Dorsolateral prefrontal cortex (tissue), 120 donors: ENCODE measurements at regions of chr2 and their contacts with region 1.

Region 1: GRCh38 chr2:21317131-21317530 is 193.4 kb downstream of the TDRD15 start:
- DNase-seq: peak in 9 of 10 donors; percentile 34 to 78 (median 59)
- H3K4me3 ChIP-seq: no peak overlapping the region
- H3K27ac ChIP-seq: peak overlapping the region in 41 of 59 donors; percentile 3 to 80 (median 43)
- H3K27me3 ChIP-seq: no peaks in the 10 kb centered on the region
- CTCF ChIP-seq: peak; percentile 42 to 96 (median 82)

Region 2: DNA sequence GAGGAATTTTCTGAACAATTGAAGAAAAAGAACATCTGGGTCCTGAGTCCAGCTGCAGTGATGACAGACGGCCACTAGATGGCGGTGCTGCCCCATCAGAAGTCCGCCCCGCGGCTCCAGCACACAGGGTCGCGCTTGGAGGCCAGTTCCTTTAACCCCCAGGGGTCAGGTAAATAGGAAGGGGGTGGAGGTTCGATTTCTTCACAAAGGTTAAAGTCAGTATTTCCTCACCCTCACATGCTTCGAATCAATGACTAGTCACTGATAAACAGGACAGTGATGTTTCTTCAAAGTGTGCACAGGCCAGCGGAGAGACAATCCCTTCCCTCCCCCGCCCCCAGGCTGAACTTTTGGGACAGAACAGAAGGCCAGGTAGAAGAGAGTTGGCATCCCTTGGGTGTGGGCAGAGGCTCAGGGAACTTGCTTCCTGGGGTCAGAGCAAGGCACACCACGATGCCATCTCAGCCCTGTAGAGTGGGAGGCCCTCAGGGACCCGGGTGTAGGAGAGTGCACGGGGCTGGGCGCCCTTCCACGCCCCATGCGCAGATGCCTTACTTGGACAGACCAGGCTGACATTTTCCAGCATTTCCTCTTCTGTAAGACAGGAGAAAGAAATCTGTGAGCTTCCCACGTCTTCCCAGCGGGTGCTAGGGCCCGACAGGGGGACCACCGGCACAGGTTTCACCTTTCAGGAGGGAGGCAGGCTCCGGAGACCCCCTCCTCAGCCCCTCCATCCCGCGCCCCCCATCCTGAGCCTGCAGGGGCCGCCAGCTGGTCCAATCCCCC is 274.0 kb before region 1 on chr2:
- intact Hi-C with region 1: loop called in 1 of 2 experiments (anchors 5 kb)
- DNase-seq: peak; percentile 44 to 82 (median 64)
- H3K4me3 ChIP-seq: peak overlapping the region in 57 of 59 donors; percentile 10 to 65 (median 42)
- H3K27ac ChIP-seq: peak overlapping the region in 1 of 59 donors; percentile 44
- H3K27me3 ChIP-seq: peaks cover 0 to 9% (median 0%) of the 10 kb centered on the region in 45 donors
- CTCF ChIP-seq: peak; percentile 86 to 100 (median 99)

Region 3: DNA sequence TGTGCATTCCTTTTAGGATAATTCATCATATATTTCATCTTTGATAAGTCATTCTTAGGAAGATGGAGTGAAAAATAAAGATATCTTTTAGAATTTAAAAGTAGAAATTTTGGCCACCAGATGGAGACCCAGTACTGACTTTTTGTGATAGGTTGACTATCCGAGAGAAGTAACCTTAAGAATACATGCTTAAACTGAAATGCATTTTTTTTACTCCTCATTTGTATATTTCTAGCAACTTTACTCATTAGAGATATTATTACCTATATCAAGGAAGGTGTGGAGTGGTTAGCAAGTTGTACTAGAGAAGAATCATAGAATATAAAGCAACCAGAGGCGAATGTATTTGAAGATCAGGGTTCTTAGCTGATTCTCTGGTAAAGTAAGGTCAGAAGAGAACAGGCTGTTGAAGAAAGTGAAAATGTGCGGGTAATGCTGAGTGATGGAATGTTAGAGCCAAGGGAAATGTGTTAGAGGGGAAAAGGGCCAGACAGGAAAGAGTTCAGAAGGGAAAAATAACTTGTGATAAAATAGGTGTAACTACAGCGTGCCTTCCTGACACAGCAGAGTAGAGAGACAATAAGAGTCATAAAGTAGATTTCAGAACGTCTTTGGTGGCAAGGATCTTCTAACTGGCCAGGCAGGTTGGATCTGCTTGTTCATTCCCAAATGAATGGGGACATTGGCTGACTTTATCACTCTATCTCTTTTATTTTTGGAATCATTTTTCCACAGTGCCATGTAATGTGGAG is 141.1 kb before region 1 on chr2:
- intact Hi-C with region 1: loop called (anchors 1 to 2 kb)
- DNase-seq: no peak
- H3K4me3 ChIP-seq: peak overlapping the region in 1 of 59 donors; percentile 2
- H3K27ac ChIP-seq: peak overlapping the region in 53 of 59 donors; percentile 1 to 86 (median 62)
- H3K27me3 ChIP-seq: no peaks in the 10 kb centered on the region
- CTCF ChIP-seq: peak; percentile 52 to 90 (median 74)

Region 4: GRCh38 chr2:21256006-21256405 is 61.1 kb before region 1 on chr2:
- intact Hi-C with region 1: loop called in 1 of 2 experiments (anchors 2 kb)
- DNase-seq: peak; percentile 24 to 93 (median 77)
- H3K4me3 ChIP-seq: peak overlapping the region in 1 of 59 donors; percentile 10
- H3K27ac ChIP-seq: peak overlapping the region; percentile 73 to 100 (median 98)
- H3K27me3 ChIP-seq: no peaks in the 10 kb centered on the region
- CTCF ChIP-seq: peak in 4 of 56 donors; percentile 11 to 24 (median 14)

Region 5: GRCh38 chr2:21276163-21276562 is 41.0 kb before region 1 on chr2:
- intact Hi-C with region 1: loop called in 1 of 2 experiments (anchors 5 kb)
- DNase-seq: no peak
- H3K4me3 ChIP-seq: no peak overlapping the region
- H3K27ac ChIP-seq: peak overlapping the region in 2 of 59 donors; percentile 0 to 2
- H3K27me3 ChIP-seq: no peaks in the 10 kb centered on the region
- CTCF ChIP-seq: no peak

Region 6: GRCh38 chr2:21381421-21381820 is 64.3 kb after region 1 on chr2:
- intact Hi-C with region 1: loop called in 1 of 2 experiments (anchors 5 kb)
- DNase-seq: peak in 1 of 10 donors; percentile 20
- H3K4me3 ChIP-seq: peak overlapping the region in 3 of 59 donors; percentile 0 to 9 (median 4)
- H3K27ac ChIP-seq: peak overlapping the region in 40 of 59 donors; percentile 1 to 91 (median 66)
- H3K27me3 ChIP-seq: peaks cover 0 to 7% (median 0%) of the 10 kb centered on the region in 45 donors
- CTCF ChIP-seq: peak in 2 of 56 donors; percentile 3 to 12

Region 7: DNA sequence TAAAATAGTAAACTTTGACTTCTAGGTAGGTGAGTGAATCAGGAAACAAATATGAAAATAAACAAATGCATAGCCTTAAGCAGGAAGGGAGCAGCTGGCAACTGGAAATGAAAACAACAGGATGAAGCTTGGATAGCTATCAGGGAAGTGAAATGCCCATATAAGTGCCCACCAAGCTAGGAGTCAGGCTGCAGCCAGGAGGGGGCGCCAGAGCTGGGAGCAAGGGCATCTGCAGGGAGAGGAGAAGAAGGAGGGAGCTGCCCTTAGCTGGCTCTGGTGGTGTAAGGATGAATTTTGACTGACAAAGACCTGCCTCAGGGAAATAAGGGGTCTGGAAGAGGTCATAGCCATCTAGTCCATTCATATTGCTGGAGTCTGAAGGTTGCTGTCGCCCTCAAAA is 104.9 kb after region 1 on chr2:
- intact Hi-C with region 1: no loop called
- DNase-seq: no peak
- H3K4me3 ChIP-seq: no peak overlapping the region
- H3K27ac ChIP-seq: no peak overlapping the region
- H3K27me3 ChIP-seq: peaks cover 0 to 5% (median 0%) of the 10 kb centered on the region in 45 donors
- CTCF ChIP-seq: peak in 37 of 56 donors; percentile 12 to 48 (median 30)

Region 8: DNA sequence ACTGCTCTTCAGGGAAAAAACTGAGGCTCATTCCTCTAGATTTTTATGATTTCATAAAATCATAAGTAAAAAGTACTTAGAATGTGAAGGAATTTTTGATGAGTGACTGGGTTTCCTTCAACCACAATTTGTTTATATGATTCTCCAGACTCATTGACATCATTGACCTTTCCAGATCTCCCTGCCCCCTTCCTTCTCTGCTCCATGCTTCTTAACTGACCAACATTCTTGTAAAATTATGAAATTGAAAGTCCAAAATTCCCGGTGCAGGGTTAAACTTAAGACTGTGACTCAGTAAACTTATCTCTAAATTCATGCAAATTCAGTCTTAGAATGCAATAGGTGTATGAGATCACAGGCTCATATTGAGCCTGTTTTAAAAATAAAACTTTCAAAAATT is 455.5 kb after region 1 on chr2:
- intact Hi-C with region 1: no loop called
- DNase-seq: no peak
- H3K4me3 ChIP-seq: no peak overlapping the region
- H3K27ac ChIP-seq: no peak overlapping the region
- H3K27me3 ChIP-seq: peaks cover 0 to 13% (median 0%) of the 10 kb centered on the region in 45 donors
- CTCF ChIP-seq: no peak